Gastrocnemius medialis (tissue), 4 donors: ENCODE measurements at regions of chr12 and their contacts with region 1.

Region 1: DNA sequence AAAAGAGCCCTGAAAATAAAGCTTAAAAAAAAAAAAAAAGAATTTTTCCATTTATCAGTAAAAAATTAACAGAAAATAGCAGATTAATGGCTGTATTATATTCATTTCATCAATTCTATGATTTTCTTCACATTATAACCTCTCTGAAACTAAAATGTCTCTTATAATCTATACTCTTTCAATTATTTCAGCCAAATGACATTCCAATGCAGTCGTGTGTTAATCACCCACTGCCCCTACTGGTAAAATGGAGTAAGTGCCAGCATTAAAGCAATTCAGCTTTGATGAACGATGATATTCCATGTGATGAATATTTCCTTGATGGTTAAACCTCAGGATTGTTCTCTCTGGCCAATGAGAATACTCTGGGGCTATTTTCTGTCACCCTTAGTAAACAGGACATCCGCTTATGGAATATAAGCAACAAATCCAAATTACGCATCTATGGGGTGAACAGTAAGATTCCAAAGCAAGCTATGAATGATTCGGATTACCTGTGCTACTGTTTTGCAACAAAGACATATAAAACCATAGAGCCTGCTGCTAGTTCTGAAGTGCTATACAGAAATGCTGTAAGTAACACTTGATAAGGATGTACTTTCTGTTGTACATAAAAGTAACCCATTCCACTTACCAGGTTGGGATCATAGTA is 20.3 kb upstream of the SYCP3 start:
- DNase-seq: no peak
- ATAC-seq: peak in 1 of 2 donors; percentile 35
- H3K4me3 ChIP-seq: no peak overlapping the region
- H3K27ac ChIP-seq: no peak overlapping the region
- H3K4me1 ChIP-seq: no peaks in the 10 kb centered on the region
- H3K27me3 ChIP-seq: no peaks in the 10 kb centered on the region
- CTCF ChIP-seq: peak; percentile 30 to 64 (median 47)
- POLR2A ChIP-seq: no peak

Region 2: DNA sequence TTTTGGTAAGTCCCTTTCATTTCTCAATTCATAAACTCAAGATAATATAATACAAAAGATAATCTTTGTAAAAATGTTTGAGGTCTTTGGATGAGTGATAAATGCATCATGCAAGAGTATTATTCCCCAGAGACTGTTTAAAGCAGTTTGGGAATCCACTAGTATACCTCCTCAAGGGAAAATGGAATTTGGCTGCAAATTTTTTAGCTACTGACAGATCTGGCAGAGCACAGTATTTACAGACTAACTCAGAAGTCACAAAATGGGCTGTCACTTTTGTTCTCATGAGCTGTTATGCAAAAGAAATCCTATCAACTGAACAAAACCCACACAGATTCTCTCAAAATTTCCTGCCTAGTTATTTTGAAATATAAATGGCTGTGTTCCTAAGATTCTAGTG is 274.5 kb before region 1 on chr12:
- in situ Hi-C with region 1: no loop called
- intact Hi-C with region 1: loop called (anchors 5 kb)
- DNase-seq: no peak
- ATAC-seq: no peak
- H3K4me3 ChIP-seq: no peak overlapping the region
- H3K27ac ChIP-seq: no peak overlapping the region
- H3K4me1 ChIP-seq: peaks cover 5 to 6% of the 10 kb centered on the region in 2 donors
- H3K27me3 ChIP-seq: no peaks in the 10 kb centered on the region
- CTCF ChIP-seq: no peak
- POLR2A ChIP-seq: no peak

Region 3: GRCh38 chr12:101670007-101670687 is 89.4 kb before region 1 on chr12:
- in situ Hi-C with region 1: no loop called
- intact Hi-C with region 1: loop called (anchors 10 kb)
- DNase-seq: peak in 1 of 2 donors; percentile 56
- ATAC-seq: peak in 1 of 2 donors; percentile 35
- H3K4me3 ChIP-seq: no peak overlapping the region
- H3K27ac ChIP-seq: peak overlapping the region; percentile 14 to 76 (median 40)
- H3K4me1 ChIP-seq: peaks cover 3 to 32% of the 10 kb centered on the region in 2 donors
- H3K27me3 ChIP-seq: no peaks in the 10 kb centered on the region
- CTCF ChIP-seq: peak; percentile 33 to 83 (median 47)
- POLR2A ChIP-seq: no peak

Region 4: DNA sequence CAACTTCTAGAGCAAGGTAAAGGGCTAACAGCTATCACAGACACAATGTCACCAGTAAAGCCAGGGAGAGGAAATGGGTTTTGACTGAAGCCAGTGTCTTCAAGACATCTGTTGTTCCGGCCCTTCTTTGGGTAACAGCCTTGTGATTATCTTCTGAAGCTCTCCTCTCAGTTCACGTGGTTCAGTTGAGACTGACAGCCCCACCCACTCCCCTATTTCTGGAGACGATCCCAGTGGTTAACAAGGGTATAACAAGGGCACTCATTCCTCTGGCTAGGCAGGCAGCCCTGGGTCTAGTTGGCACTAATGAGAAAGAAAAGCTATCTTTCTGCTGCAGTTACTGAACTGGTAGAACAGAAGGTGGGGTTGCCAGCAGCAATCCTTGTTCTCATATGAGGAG is 64.4 kb after region 1 on chr12:
- in situ Hi-C with region 1: no loop called
- intact Hi-C with region 1: no loop called
- DNase-seq: peak; percentile 68 to 80
- ATAC-seq: peak; percentile 90 to 96
- H3K4me3 ChIP-seq: no peak overlapping the region
- H3K27ac ChIP-seq: peak overlapping the region; percentile 66 to 89 (median 78)
- H3K4me1 ChIP-seq: peaks cover 7 to 41% of the 10 kb centered on the region in 2 donors
- H3K27me3 ChIP-seq: no peaks in the 10 kb centered on the region
- CTCF ChIP-seq: peak in 4 of 5 experiments; percentile 20 to 35 (median 27)
- POLR2A ChIP-seq: no peak